Caco-2 (cell line): ENCODE measurements at regions of chr3 and their contacts with region 1.

Region 1: GRCh38 chr3:158845765-158846350 is 44.0 kb downstream of the MFSD1 start:
- DNase-seq: peak in 1 of 2 experiments; percentile 57
- H3K4me3 ChIP-seq: no peak overlapping the region
- H3K4me3 Mint-ChIP-seq: no peak overlapping the region
- H3K27ac Mint-ChIP-seq: no peak overlapping the region
- H3K4me1 ChIP-seq: no peaks in the 10 kb centered on the region
- H3K4me1 Mint-ChIP-seq: no peaks in the 10 kb centered on the region
- H3K27me3 ChIP-seq: no peaks in the 10 kb centered on the region; the same call in 1 of the 2 replicates
- H3K27me3 Mint-ChIP-seq: peaks cover 18% of the 10 kb centered on the region
- CTCF ChIP-seq: peak; percentile 58 to 75

Region 2: DNA sequence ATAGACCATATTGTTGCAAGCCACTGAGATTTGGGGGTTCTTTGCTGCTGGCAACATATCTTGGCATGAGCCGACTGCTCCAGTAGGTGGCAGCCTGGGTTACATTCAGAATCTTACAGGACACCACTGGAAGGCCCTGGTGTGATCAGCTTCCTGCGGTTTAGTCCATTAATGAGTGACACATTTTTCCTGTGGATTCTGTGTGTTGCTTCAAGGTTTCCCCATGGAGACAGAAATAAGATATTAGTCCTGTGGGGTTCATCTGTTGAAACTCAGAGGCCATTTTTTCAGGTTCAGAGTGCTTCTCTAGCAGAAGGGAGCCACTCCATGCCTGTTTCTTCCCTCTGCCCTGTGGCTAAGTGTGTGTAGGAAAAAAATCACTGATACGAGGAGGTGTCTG is 72.2 kb after region 1 on chr3:
- CTCF ChIA-PET with region 1: no interaction called
- POLR2A ChIA-PET with region 1: no interaction called
- intact Hi-C with region 1: loop called (anchors 2 kb)
- DNase-seq: peak; percentile 52 to 55
- H3K4me3 ChIP-seq: no peak overlapping the region
- H3K4me3 Mint-ChIP-seq: no peak overlapping the region
- H3K27ac Mint-ChIP-seq: no peak overlapping the region
- H3K4me1 ChIP-seq: no peaks in the 10 kb centered on the region
- H3K4me1 Mint-ChIP-seq: no peaks in the 10 kb centered on the region
- H3K27me3 ChIP-seq: no peaks in the 10 kb centered on the region
- H3K27me3 Mint-ChIP-seq: peaks cover 7% of the 10 kb centered on the region
- CTCF ChIP-seq: peak; percentile 73 to 82

Region 3: DNA sequence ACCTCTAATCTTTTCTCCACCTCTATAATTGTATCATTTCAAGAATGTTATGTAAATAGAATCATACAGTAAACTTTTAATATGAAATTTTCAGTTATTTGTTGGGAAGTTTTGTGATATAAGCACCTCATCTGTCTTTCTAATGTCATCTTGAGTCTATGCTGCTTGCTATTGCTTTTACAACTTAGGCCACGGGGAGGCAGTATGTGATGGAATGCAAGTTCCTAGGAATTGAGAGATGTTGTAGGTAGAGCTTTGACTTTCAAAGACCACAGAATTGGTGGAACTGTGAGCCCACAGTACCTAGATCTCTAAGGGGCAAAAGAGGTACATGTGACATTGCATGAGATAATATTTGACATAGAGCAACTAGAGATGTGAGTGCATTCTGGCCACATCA is 284.2 kb after region 1 on chr3:
- CTCF ChIA-PET with region 1: no interaction called
- POLR2A ChIA-PET with region 1: no interaction called
- intact Hi-C with region 1: loop called (anchors 10 kb)
- DNase-seq: peak in 1 of 2 experiments; percentile 5
- H3K4me3 ChIP-seq: no peak overlapping the region
- H3K4me3 Mint-ChIP-seq: no peak overlapping the region
- H3K27ac Mint-ChIP-seq: no peak overlapping the region
- H3K4me1 ChIP-seq: no peaks in the 10 kb centered on the region
- H3K4me1 Mint-ChIP-seq: no peaks in the 10 kb centered on the region
- H3K27me3 ChIP-seq: no peaks in the 10 kb centered on the region
- H3K27me3 Mint-ChIP-seq: peaks cover 4% of the 10 kb centered on the region
- CTCF ChIP-seq: peak; percentile 25 to 30

Region 4: GRCh38 chr3:159252772-159253384 is 407.0 kb after region 1 on chr3:
- CTCF ChIA-PET with region 1: interaction called, 3 read pairs
- POLR2A ChIA-PET with region 1: no interaction called
- intact Hi-C with region 1: loop called (anchors 2 kb)
- DNase-seq: peak in 1 of 2 experiments; percentile 11
- H3K4me3 ChIP-seq: no peak overlapping the region
- H3K4me3 Mint-ChIP-seq: no peak overlapping the region
- H3K27ac Mint-ChIP-seq: no peak overlapping the region
- H3K4me1 ChIP-seq: no peaks in the 10 kb centered on the region
- H3K4me1 Mint-ChIP-seq: no peaks in the 10 kb centered on the region
- H3K27me3 ChIP-seq: no peaks in the 10 kb centered on the region
- H3K27me3 Mint-ChIP-seq: peaks cover 10% of the 10 kb centered on the region
- CTCF ChIP-seq: peak in 1 of 2 experiments; percentile 48

Region 5: GRCh38 chr3:159586571-159587202 is 740.8 kb after region 1 on chr3:
- CTCF ChIA-PET with region 1: no interaction called
- POLR2A ChIA-PET with region 1: no interaction called
- intact Hi-C with region 1: loop called (anchors 10 kb)
- DNase-seq: peak in 1 of 2 experiments; percentile 54
- H3K4me3 ChIP-seq: no peak overlapping the region
- H3K4me3 Mint-ChIP-seq: no peak overlapping the region
- H3K27ac Mint-ChIP-seq: no peak overlapping the region
- H3K4me1 ChIP-seq: peaks cover 32% of the 10 kb centered on the region
- H3K4me1 Mint-ChIP-seq: peaks cover 18% of the 10 kb centered on the region
- H3K27me3 ChIP-seq: no peaks in the 10 kb centered on the region
- H3K27me3 Mint-ChIP-seq: peaks cover 3% of the 10 kb centered on the region
- CTCF ChIP-seq: peak; percentile 54 to 72